ENCODE measurements at regions of chr2 and their contacts with region 1.

Region 1: DNA sequence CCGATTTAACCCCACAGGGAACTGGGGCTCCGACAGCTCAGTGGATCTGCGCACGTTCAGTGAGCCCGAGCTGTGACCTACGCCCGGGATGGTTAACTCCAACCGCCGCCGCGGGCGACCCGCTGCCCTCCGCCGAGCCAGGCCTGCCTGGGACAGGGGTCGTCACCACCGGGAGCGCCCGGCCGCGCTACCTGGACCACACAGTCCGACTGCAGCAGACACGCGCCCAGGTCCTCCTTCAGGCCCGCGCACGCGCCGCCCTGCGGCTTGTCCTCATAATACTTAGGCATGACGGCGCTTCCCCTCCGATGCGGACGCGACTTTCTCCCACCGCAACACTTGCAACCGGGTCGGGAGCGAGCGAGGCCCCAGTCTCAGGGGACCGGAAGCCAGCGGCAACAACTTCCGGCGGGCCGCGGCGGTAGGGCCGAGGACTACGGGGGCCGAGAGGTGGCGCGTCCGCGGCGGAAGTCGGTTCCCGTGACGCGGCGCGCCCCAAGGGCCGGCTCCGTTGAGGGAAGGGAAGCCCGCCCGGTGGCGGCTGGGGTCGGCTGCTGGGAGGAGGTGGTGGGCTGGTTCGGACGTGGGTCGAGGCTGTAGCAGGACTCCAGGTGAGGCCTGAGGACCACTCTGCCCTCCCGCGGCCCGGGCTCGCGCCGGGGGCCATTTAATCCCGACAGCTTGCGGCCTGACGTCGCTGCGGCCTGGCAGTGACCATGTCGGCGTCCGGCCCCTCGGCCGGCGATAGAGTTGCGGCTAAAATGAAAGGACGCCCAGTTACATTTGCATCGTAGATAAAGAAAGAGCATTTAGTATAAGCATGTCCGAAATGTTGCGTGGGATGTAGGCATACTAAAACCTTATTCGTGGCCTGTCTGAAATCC is at the starts of genes COA5 and UNC50:
- DNase-seq: peak; percentile 91
- H3K4me3 Mint-ChIP-seq: peak within 1 kb of the TSS; percentile 94
- H3K27ac Mint-ChIP-seq: peak within 1 kb of the TSS; percentile 94
- H3K4me1 Mint-ChIP-seq: peaks cover 65% of the 10 kb centered on the region
- H3K27me3 Mint-ChIP-seq: peaks cover 3% of the 10 kb centered on the region
- total RNA-seq, gene COA5: 20.3 and 21.2 TPM in 2 replicates
- total RNA-seq, gene UNC50: 41.4 and 43.0 TPM in 2 replicates

Region 2: GRCh38 chr2:97718051-97718882 is 890.1 kb before region 1 on chr2:
- intact Hi-C with region 1: loop called (anchors 5 kb)
- DNase-seq: peak; percentile 71
- H3K4me3 Mint-ChIP-seq: peak overlapping the region; percentile 94
- H3K27ac Mint-ChIP-seq: peak overlapping the region; percentile 93
- H3K4me1 Mint-ChIP-seq: peaks cover 69% of the 10 kb centered on the region
- H3K27me3 Mint-ChIP-seq: no peaks in the 10 kb centered on the region

Region 3: DNA sequence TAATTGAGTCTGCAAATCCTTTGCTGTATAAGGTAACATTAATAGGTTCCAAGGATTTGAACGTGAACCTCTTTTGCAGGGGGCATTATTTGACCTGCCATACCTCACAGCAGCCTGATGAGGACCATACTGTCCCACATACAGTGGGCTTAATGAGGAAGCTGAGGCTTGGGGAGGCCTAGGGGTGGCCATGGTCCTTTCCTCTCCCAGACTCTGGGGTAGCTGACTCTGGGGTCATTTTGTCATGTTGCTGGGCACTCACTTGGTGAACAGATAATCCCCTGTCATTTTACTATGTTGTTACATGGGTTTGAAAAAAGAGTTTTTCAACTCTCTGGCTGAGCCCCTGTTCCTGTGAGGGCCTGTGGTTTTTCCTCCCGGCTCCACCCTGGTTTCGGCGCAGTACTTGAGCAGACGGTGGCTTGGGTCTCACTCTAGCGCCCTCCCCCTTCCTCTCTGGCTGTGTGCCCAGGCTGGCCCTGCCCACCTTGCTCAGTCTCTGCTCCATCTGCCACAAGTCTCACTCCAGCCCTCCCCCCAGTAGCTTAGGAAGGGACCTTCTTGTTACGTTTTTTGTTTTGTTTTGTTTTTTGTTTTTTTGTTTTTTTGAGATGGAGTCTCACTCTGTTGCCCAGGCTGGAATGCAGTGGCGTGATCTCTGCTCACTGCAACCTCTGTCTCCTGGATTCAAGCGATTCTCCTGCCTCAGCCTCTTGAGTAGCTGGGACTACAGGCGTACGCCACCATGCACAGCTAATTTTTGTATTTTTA is 142.7 kb before region 1 on chr2:
- intact Hi-C with region 1: loop called (anchors 5 kb)
- DNase-seq: peak; percentile 70
- H3K4me3 Mint-ChIP-seq: peak overlapping the region; percentile 84
- H3K27ac Mint-ChIP-seq: peak overlapping the region; percentile 99
- H3K4me1 Mint-ChIP-seq: peaks cover 83% of the 10 kb centered on the region
- H3K27me3 Mint-ChIP-seq: no peaks in the 10 kb centered on the region

Region 4: DNA sequence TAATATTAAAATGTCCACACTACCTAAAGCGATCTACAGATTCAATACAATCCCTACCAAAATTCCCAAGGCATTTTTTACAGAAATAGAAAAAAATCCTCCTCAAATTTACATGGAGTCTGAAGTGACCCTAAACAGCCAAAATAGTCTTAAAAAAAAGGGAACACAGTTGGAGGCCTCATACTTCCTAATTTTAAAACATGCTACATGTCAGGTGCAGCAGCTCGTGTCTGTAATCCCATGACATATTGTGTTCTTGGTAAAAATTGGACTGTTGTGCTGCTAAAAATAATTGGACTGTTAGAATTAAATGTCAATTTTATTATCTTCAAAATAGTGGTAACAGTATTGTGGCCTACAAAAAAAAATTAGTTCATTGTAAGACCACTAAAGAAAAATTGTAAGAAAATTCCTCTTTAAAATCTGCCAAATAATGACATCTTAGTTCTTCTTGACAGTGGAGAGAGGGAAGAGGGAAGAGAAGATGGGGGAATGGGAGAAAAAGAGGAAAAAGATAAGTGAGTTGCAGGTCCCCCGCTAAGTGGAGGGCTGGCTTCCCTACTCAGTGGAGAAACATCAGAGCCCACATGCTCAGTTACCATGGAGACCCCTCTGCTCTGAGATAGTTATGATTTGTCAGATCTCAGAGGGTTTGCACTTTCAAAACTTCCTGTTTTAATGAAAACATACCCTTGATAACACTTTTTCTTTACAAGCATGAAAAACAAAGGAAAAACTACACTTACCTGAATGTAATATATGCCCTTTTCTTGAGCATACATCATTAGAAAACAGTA is 46.5 kb after region 1 on chr2:
- intact Hi-C with region 1: loop called (anchors 2 kb)
- DNase-seq: no peak
- H3K4me3 Mint-ChIP-seq: peak overlapping the region; percentile 65
- H3K27ac Mint-ChIP-seq: peak overlapping the region; percentile 84
- H3K4me1 Mint-ChIP-seq: peaks cover 91% of the 10 kb centered on the region
- H3K27me3 Mint-ChIP-seq: no peaks in the 10 kb centered on the region

Region 5: GRCh38 chr2:99154643-99155536 is 546.5 kb after region 1 on chr2 and contains the starts of genes LIPT1 and TSGA10:
- intact Hi-C with region 1: loop called (anchors 2 kb)
- DNase-seq: peak; percentile 92
- H3K4me3 Mint-ChIP-seq: no peak within 1 kb of the TSS
- H3K27ac Mint-ChIP-seq: peak within 1 kb of the TSS; percentile 95
- H3K4me1 Mint-ChIP-seq: peaks cover 31% of the 10 kb centered on the region
- H3K27me3 Mint-ChIP-seq: no peaks in the 10 kb centered on the region
- total RNA-seq, gene LIPT1: 2.2 and 3.3 TPM in 2 replicates
- total RNA-seq, gene TSGA10: 3.0 and 4.1 TPM in 2 replicates

Region 6: DNA sequence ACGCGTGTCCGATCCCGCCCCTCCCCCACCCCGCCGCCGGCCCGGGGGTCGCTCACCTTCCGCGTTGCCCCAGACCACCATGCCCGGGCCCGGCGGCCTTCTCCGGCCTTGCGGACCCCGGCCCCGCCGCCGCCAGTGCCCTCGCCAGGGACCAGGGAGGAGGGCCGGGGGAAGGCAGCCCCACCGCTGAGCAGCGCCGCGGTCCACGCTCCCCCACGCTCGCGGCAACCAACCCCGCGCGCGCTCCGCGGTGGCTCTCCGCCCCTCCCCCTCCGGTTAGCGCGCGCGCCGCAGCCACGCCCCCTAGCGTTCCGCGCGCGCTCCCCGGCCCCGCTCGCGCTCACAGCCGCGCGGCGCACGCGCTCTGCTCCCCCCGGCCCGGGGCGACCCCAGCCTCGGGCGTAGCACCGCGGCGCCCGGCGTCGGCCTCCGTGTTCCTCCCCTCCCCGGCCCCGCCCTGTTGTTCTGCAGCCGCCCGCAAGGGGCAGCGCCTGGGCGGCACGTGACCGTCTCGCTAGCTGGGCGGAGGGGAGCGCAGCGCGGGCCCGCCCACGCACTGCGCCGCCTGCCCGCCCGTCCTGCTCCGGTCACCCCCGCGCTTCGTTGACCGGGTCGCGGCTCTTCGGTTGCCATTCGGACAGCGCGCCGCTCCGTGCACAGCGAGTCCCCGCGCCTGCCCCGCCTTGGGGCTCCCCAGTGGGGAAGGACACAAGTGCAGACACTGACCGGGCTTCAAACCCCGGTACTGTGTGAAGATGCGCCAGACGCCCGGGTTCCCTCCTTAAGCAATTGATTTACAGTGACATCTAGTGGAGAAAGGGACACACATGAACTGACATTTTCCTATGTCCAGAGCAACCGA is 881.6 kb after region 1 on chr2 and contains the start of gene REV1:
- intact Hi-C with region 1: loop called (anchors 10 kb)
- DNase-seq: peak; percentile 87
- H3K4me3 Mint-ChIP-seq: peak within 1 kb of the TSS; percentile 94
- H3K27ac Mint-ChIP-seq: peak within 1 kb of the TSS; percentile 97
- H3K4me1 Mint-ChIP-seq: peaks cover 35% of the 10 kb centered on the region
- H3K27me3 Mint-ChIP-seq: peaks cover 3% of the 10 kb centered on the region
- total RNA-seq, gene REV1: 49.6 and 53.7 TPM in 2 replicates

Measured in activated T-helper 1 cell treated with anti-CD3 and anti-CD28 coated beads, Interleukin-12 subunit alpha, Interleukin-12 subunit beta, Interleukin-2, Interleukin-4 antibody, amounts not matched to agents 30 ng/mL and 10 ng/mL and 1 ng/mL, durations not matched to agents 14 hours and 24 hours and 36 hours (primary cell).